A673 (cell line): ENCODE measurements at regions of chr22 and their contacts with region 1.

Region 1: DNA sequence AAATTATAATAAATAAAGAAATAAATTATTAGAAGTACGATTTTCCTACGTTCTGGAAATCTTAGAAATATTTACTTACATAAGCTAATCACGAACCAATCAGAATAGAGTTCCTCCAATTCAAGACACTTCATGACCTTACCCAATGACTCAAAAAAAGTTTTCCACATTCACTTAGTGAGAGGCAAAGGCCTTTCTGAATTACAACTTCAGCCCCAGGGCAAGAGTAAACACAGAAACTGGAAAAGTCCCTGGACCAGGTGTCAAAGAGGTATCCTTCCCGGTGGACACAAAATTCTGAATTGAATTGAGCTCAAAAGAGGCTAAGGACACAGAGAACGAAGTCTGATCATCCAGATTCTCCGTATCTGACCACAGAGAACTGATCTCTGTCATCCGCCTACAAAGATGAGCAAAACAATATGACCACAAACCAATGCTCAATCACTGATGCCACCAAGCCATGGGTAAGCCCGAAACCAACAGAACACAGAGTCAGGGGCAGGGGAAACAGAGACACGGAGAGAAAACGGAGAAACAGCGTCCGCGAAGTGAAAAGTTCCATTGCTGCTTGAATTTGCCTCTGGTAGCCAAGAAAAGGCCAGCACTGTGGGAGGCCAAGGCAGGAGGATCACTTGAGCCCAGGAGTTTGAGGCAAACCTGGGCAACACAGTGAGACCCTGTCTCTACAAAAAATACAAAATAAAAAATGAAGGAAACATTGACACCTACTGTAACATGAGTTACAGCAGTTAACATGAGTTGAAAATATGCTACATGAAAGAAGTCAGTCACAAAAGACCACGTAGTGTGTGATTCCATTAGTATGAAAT is 6.8 kb downstream of the BID start:
- DNase-seq: no peak
- H3K4me3 ChIP-seq: no peak overlapping the region
- H3K27ac ChIP-seq: no peak overlapping the region
- H3K4me1 ChIP-seq: no peaks in the 10 kb centered on the region
- H3K27me3 ChIP-seq: no peaks in the 10 kb centered on the region
- CTCF ChIP-seq: no peak

Region 2: GRCh38 chr22:17483688-17484381 is 283.6 kb before region 1 on chr22:
- CTCF ChIA-PET with region 1: no interaction called
- POLR2A ChIA-PET with region 1: no interaction called
- intact Hi-C with region 1: no loop called
- DNase-seq: no peak
- H3K4me3 ChIP-seq: no peak overlapping the region
- H3K27ac ChIP-seq: no peak overlapping the region
- H3K4me1 ChIP-seq: no peaks in the 10 kb centered on the region
- H3K27me3 ChIP-seq: peaks cover 4% of the 10 kb centered on the region
- CTCF ChIP-seq: no peak

Region 3: DNA sequence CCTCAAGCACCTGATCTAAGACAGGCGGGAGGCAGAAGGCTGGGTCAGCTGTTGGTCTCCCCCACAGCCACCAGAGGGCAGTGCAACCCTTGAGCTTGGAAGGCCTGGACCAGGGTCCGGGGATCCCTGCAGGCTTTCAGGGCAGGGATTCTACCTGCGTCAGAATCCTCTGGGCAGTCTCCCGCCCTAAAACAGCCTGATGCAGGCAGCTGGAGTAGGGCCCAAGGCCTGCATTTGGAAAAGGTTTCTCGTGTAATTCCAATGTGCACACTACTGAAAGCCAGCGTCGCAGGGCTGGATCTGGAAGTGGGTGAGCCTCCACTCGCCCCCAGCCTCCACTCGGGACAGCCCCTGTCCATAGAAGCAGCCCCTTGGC is 24.9 kb before region 1 on chr22:
- CTCF ChIA-PET with region 1: interaction called, 10 read pairs
- POLR2A ChIA-PET with region 1: no interaction called
- intact Hi-C with region 1: no loop called
- DNase-seq: peak; percentile 75
- H3K4me3 ChIP-seq: no peak overlapping the region
- H3K27ac ChIP-seq: no peak overlapping the region
- H3K4me1 ChIP-seq: no peaks in the 10 kb centered on the region
- H3K27me3 ChIP-seq: no peaks in the 10 kb centered on the region
- CTCF ChIP-seq: peak; percentile 74

Region 4: GRCh38 chr22:18031695-18032454 is 264.4 kb after region 1 on chr22:
- CTCF ChIA-PET with region 1: no interaction called
- POLR2A ChIA-PET with region 1: no interaction called
- intact Hi-C with region 1: no loop called
- DNase-seq: peak; percentile 82
- H3K4me3 ChIP-seq: no peak overlapping the region
- H3K27ac ChIP-seq: no peak overlapping the region
- H3K4me1 ChIP-seq: no peaks in the 10 kb centered on the region
- H3K27me3 ChIP-seq: no peaks in the 10 kb centered on the region
- CTCF ChIP-seq: no peak

Region 5: DNA sequence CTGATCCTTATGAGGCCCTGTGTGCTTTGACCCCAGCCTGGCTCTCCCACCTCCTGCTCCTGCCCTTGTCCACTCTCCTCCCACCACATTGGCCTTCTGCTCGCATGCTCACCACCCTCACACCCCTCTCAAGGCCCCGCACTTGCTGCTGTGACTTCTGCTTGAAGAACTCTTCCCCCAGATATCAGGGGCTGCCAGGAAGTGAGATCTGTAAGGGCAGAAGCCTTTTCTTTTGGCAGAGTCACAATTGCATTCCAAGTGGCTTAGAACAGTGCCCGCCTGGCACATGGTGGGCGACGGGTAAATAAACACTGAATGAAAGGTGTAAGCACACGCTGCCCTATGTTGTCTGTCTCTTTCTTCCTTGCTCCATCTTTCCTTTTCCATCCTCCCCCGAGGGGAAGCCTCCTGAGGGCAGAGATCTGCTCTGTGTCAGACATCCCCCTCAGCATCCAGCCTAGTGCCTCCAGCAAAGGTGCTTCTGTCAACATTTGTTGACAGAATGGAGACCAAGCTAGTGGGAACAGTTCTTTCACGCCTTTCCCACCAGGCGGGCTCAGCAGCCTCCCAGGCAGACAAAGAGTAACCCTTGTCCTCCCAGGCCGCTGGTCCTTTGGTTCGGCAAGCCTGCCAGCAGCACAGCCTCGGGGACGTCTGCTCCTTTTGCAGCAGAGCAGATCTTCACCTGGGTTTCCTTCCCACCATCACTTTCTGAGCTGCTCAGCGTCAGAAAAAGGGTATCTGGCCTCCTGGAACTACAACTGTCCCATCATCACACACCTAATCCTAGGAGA is 300.3 kb after region 1 on chr22:
- CTCF ChIA-PET with region 1: no interaction called
- POLR2A ChIA-PET with region 1: no interaction called
- intact Hi-C with region 1: no loop called
- DNase-seq: no peak
- H3K4me3 ChIP-seq: no peak overlapping the region
- H3K27ac ChIP-seq: no peak overlapping the region
- H3K4me1 ChIP-seq: peaks cover 9% of the 10 kb centered on the region
- H3K27me3 ChIP-seq: no peaks in the 10 kb centered on the region
- CTCF ChIP-seq: no peak

Region 6: GRCh38 chr22:18077639-18078328 is 310.3 kb after region 1 on chr22 and contains the start of gene PEX26:
- CTCF ChIA-PET with region 1: no interaction called
- POLR2A ChIA-PET with region 1: no interaction called
- intact Hi-C with region 1: no loop called
- DNase-seq: peak; percentile 97
- H3K4me3 ChIP-seq: peak within 1 kb of the TSS; percentile 91
- H3K27ac ChIP-seq: peak within 1 kb of the TSS; percentile 70
- H3K4me1 ChIP-seq: peaks cover 19% of the 10 kb centered on the region
- H3K27me3 ChIP-seq: no peaks in the 10 kb centered on the region
- CTCF ChIP-seq: no peak
- total RNA-seq, gene PEX26: 36.9 and 38.3 TPM in 2 replicates